ENCODE measurements at regions of chr10 and their contacts with region 1.

Region 1: GRCh38 chr10:17257466-17258321 is 29.7 kb downstream of the VIM start:
- DNase-seq: peak; percentile 29
- H3K4me3 ChIP-seq: no peak overlapping the region
- CTCF ChIP-seq: peak; percentile 70

Region 2: GRCh38 chr10:16828114-16828568 is 429.6 kb before region 1 on chr10:
- CTCF ChIA-PET with region 1: interaction called, 35 read pairs
- POLR2A ChIA-PET with region 1: no interaction called
- DNase-seq: peak; percentile 31
- H3K4me3 ChIP-seq: no peak overlapping the region
- CTCF ChIP-seq: peak; percentile 26

Region 3: DNA sequence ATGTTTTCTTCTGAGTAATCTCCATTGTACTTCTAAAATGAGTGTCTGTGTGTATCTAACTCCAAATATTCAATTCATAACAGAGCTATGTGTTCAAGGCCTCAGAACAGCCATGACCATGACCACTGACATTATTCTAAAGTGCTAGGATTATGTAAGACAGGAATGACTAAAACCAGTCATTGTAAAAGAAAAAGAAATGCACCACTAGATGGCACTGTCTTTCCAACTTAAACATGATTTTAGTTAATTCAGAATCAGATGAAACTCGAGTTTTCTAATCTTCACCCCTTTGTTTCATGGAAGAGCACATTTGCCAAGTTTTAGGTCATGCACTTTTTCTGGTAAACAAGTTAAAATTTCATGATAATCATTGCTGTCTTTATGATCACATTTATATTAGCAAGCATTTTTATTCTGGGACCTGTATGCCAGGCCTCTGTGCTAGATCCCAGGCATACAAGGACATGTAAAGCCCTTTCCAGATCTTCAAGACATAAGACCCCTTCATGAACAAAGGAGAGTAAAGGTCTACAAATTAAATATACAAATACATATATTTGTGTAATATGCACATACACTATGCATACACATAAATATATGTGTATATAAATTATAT is 414.3 kb before region 1 on chr10:
- CTCF ChIA-PET with region 1: interaction called, 30 read pairs
- POLR2A ChIA-PET with region 1: no interaction called
- DNase-seq: no peak
- H3K4me3 ChIP-seq: no peak overlapping the region
- CTCF ChIP-seq: no peak

Region 4: DNA sequence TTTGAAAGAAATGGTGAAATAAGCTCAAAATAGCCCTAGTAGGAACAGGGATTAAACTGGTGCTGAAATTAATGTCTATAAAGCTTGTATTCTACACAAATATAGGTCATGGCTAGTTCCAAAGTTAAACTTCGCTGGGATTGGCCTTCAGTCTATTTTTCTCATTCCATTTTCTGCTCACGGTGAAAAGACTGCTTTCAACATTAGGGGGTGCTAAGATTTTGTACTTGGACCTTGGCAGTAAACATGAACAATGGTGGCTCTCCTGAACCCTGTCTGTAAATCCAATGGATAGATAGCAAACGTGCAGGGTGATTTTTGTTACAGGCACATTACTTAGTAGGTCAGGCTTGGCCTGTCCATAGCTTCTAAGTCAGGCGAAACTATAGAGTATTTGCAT is 404.5 kb before region 1 on chr10:
- CTCF ChIA-PET with region 1: interaction called, 23 read pairs
- POLR2A ChIA-PET with region 1: no interaction called
- DNase-seq: no peak
- H3K4me3 ChIP-seq: no peak overlapping the region
- CTCF ChIP-seq: peak; percentile 53

Region 5: GRCh38 chr10:17244700-17245365 is 12.9 kb before region 1 on chr10:
- CTCF ChIA-PET with region 1: interaction called, 17 read pairs
- POLR2A ChIA-PET with region 1: no interaction called
- DNase-seq: no peak
- H3K4me3 ChIP-seq: no peak overlapping the region
- CTCF ChIP-seq: no peak

Region 6: GRCh38 chr10:17273403-17273802 is 15.7 kb after region 1 on chr10:
- CTCF ChIA-PET with region 1: interaction called, 14 read pairs
- POLR2A ChIA-PET with region 1: no interaction called
- DNase-seq: peak; percentile 19
- H3K4me3 ChIP-seq: no peak overlapping the region
- CTCF ChIP-seq: no peak